ENCODE measurements at regions of chr12 and their contacts with region 1.

Region 1: DNA sequence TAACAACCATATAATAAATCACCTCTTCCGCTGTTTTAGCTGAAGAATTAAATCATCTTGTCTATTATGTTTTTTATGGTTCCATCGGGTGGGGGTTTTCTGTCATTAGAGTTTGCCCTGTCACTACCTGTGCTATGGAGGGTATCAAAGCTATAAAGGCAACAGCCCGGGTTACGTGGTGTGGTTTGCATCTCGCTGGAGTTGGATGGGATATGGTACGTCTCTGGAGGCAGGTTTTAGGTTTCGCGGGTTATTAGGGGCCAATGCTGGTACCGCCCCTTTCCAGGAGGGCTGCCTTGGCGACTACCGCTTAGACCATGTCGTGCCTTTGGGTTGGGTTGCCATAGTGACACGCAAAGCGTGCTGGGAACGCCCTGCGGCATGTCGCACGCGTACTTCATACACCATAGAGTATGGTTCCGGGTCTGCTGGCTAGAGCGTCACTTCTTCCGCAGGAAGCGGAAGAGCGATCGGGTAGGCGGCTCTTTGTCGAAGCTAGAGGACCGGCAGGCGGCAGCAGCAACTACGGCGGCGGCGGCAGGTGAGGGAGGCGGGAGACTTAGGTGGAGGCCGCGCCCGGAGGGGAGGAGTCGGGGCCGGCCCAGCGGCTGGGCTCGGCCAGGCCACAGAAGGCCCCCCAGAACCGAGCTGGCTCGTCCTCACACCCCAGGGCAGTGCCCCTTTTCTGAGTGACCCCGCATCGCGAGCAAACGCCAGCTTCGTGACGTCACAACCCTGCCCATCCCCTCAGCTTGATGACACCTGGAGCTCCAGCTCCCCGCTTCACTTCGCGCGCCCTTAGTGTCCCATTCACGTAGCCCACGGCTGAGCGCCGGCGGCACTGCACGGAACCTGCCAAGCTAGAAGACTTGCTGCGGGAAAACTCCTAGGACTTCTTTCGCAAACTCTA is at the start of gene ZC3H10:
- DNase-seq: peak; percentile 98
- H3K4me3 Mint-ChIP-seq: peak within 1 kb of the TSS; percentile 91
- H3K27ac Mint-ChIP-seq: peak within 1 kb of the TSS; percentile 99
- H3K4me1 Mint-ChIP-seq: peaks cover 31% of the 10 kb centered on the region
- H3K27me3 Mint-ChIP-seq: no peaks in the 10 kb centered on the region
- total RNA-seq, gene ZC3H10: 13.5 and 13.7 TPM in 2 replicates

Region 2: DNA sequence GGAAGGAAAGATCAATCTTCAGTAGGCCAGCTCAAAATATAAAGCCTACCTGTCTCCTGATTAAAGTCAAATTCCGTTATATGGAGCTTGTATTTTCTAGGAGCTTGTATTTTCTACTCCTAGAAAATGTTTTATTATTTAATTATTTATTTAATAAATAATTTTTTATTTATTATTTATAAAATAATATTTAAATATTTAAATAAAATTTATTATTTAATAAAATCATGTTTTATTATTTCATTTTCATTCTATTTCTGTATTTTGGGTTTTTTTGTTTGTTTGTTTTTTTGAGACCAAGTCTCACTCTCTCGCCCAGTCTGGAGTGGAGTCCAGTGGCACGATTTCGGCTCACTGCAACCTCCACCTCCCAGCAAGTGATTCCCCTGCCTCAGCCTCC is 745.5 kb before region 1 on chr12:
- intact Hi-C with region 1: no loop called
- DNase-seq: no peak
- H3K4me3 Mint-ChIP-seq: no peak overlapping the region
- H3K27ac Mint-ChIP-seq: no peak overlapping the region
- H3K4me1 Mint-ChIP-seq: no peaks in the 10 kb centered on the region
- H3K27me3 Mint-ChIP-seq: no peaks in the 10 kb centered on the region

Region 3: DNA sequence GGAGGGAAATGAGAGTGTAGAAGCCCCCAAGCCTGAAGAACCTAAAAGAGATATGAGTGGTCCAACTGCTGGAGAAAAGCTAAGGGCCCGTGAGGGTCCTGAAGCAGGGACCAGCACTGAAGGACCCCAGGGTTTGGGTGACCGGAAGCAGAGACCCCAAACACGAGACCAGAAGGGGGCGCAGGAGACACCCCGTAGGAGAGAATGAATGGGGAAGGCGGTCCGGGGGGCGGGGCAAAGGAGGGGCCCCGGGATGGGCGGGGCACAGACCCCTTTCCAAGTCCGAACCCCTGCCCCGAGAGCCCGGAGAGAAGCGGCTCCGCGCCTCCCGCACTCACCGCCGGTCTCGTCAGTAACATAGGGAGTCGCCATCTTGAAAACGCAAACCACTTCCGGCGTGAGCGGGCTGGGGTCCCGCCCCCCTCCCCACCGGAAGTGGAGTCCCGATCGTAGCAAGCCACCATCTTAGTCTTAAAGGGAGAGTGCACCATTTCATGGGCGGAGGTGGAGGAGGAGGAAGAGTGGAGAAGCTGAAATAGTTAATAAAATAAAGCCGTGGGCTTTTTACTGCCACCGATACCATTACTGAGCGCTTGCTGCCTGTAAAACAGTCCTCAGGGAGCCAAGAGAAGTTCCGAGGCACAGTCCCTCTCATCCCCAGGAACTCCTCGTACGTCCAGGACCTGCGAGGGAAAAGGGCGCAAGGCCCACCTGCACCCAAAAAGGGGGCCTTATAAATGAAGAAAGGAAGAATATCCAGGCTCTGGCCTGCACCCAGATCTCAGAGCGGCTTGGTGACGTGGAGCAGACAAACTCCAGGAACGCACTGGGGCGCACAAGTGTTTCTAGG is 191.1 kb before region 1 on chr12:
- intact Hi-C with region 1: loop called (anchors 1 kb)
- DNase-seq: peak; percentile 85
- H3K4me3 Mint-ChIP-seq: peak overlapping the region; percentile 90
- H3K27ac Mint-ChIP-seq: peak overlapping the region; percentile 96
- H3K4me1 Mint-ChIP-seq: peaks cover 52% of the 10 kb centered on the region
- H3K27me3 Mint-ChIP-seq: no peaks in the 10 kb centered on the region

Region 4: GRCh38 chr12:56127888-56128669 is 10.0 kb after region 1 on chr12 and contains the start of gene ESYT1:
- intact Hi-C with region 1: loop called (anchors 1 kb)
- DNase-seq: peak; percentile 98
- H3K4me3 Mint-ChIP-seq: peak within 1 kb of the TSS; percentile 97
- H3K27ac Mint-ChIP-seq: peak within 1 kb of the TSS; percentile 94
- H3K4me1 Mint-ChIP-seq: peaks cover 62% of the 10 kb centered on the region
- H3K27me3 Mint-ChIP-seq: no peaks in the 10 kb centered on the region
- total RNA-seq, gene ESYT1: 159 and 161 TPM in 2 replicates

Region 5: GRCh38 chr12:56258057-56258819 is 140.2 kb after region 1 on chr12 and contains the start of gene ANKRD52:
- intact Hi-C with region 1: loop called (anchors 1 kb)
- DNase-seq: peak; percentile 82
- H3K4me3 Mint-ChIP-seq: peak within 1 kb of the TSS; percentile 90
- H3K27ac Mint-ChIP-seq: peak within 1 kb of the TSS; percentile 83
- H3K4me1 Mint-ChIP-seq: peaks cover 22% of the 10 kb centered on the region
- H3K27me3 Mint-ChIP-seq: no peaks in the 10 kb centered on the region
- total RNA-seq, gene ANKRD52: 71.0 and 83.9 TPM in 2 replicates

Region 6: GRCh38 chr12:56359851-56360767 is 242.1 kb after region 1 on chr12 and contains the start of gene STAT2:
- intact Hi-C with region 1: loop called (anchors 5 kb)
- DNase-seq: peak; percentile 100
- H3K4me3 Mint-ChIP-seq: peak within 1 kb of the TSS; percentile 97
- H3K27ac Mint-ChIP-seq: peak within 1 kb of the TSS; percentile 97
- H3K4me1 Mint-ChIP-seq: peaks cover 29% of the 10 kb centered on the region
- H3K27me3 Mint-ChIP-seq: no peaks in the 10 kb centered on the region
- total RNA-seq, gene STAT2: 70.2 and 71.3 TPM in 2 replicates

Region 7: DNA sequence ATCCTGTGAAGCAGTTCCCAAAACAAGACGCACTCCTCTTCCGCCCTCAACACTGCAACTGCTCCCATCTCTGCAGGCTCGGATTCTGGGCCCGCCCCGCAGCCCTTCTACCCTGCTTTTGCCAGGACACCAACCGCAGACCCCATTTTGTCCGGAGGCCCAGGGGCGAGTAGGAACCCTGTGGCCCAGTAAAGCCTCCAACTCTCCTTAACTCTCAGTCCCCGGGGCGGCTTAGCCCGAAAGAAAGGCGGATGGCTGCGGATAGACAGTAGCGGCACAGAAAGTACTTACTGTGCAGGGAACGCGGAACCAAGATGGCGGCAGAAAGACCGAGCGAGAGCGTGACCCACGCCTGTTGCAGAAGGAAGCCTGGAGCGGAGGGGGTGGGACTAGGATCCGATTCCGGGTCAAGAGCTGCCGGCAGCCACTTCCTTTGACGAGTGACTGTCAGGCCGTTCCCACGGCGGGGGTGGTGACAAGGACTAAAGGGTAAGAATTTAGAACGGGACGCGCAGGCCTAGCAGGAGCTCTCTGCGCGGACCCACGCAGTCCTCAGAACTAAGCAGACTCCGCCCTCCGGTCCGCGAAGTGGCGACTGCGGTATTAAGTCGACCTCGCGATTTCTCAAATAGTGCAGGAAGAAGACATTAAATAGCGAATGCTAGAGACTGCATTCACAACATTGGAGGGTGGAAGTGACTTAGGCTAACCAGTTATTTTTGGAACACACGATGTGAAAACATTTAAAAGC is 607.1 kb after region 1 on chr12 and contains the start of gene NACA:
- intact Hi-C with region 1: loop called (anchors 1 kb)
- DNase-seq: peak; percentile 98
- H3K4me3 Mint-ChIP-seq: peak within 1 kb of the TSS; percentile 91
- H3K27ac Mint-ChIP-seq: peak within 1 kb of the TSS; percentile 91
- H3K4me1 Mint-ChIP-seq: peaks cover 48% of the 10 kb centered on the region
- H3K27me3 Mint-ChIP-seq: peaks cover 1% of the 10 kb centered on the region
- total RNA-seq, gene NACA: 942 and 963 TPM in 2 replicates